Caco-2 (cell line): ENCODE measurements at regions of chr4 and their contacts with region 1.

Region 1: GRCh38 chr4:88514557-88515511 is 8.7 kb downstream of the PYURF start:
- DNase-seq: no peak
- H3K4me3 ChIP-seq: no peak overlapping the region
- H3K4me3 Mint-ChIP-seq: no peak overlapping the region
- H3K27ac Mint-ChIP-seq: no peak overlapping the region
- H3K4me1 ChIP-seq: no peaks in the 10 kb centered on the region
- H3K4me1 Mint-ChIP-seq: no peaks in the 10 kb centered on the region
- H3K27me3 ChIP-seq: no peaks in the 10 kb centered on the region
- H3K27me3 Mint-ChIP-seq: no peaks in the 10 kb centered on the region
- CTCF ChIP-seq: no peak

Region 2: DNA sequence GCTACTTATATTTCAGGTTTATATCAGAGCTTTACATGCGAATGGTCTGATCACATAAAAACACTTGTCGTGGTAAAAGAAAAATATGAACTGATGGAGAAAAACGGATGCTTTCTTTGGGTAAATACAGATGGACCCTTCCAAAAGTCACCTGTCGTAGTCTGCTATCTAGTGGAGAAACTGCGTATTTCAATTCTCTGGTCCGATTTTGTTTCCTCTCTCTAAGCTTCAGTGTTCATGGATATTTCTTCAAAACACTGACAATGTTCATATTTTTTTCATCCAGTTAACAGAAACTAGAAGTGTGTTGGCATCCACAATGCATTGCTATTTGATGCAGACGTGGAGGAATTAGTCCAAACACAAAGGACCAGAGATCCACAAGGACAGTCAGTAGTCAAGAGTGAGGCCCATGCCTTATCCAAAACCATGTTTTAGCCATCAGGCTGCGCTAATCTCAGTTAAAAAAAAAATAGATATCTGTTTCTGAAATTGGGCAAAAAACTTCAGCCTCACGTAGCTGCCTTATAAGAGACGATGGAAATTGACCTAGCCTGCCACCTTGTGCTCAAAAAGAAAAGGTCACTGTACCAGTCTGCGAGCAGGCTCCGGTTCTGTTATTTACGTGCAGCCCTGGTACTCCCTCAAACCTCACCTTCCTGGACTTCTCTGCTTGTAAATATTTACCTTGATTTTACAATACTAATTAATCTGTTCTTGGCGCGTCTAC is 666.0 kb before region 1 on chr4:
- CTCF ChIA-PET with region 1: interaction called, 5 read pairs
- POLR2A ChIA-PET with region 1: no interaction called
- intact Hi-C with region 1: loop called (anchors 5 kb)
- DNase-seq: peak in 1 of 2 experiments; percentile 50
- H3K4me3 ChIP-seq: no peak overlapping the region
- H3K4me3 Mint-ChIP-seq: no peak overlapping the region
- H3K27ac Mint-ChIP-seq: no peak overlapping the region
- H3K4me1 ChIP-seq: peaks cover 12% of the 10 kb centered on the region
- H3K4me1 Mint-ChIP-seq: peaks cover 23% of the 10 kb centered on the region
- H3K27me3 ChIP-seq: no peaks in the 10 kb centered on the region
- H3K27me3 Mint-ChIP-seq: peaks cover 10% of the 10 kb centered on the region
- CTCF ChIP-seq: peak; percentile 49 to 72

Region 3: GRCh38 chr4:88054901-88055300 is 459.9 kb before region 1 on chr4:
- CTCF ChIA-PET with region 1: interaction called, 5 read pairs
- POLR2A ChIA-PET with region 1: no interaction called
- intact Hi-C with region 1: loop called (anchors 2 kb)
- DNase-seq: peak; percentile 71
- H3K4me3 ChIP-seq: no peak overlapping the region
- H3K4me3 Mint-ChIP-seq: no peak overlapping the region
- H3K27ac Mint-ChIP-seq: no peak overlapping the region
- H3K4me1 ChIP-seq: no peaks in the 10 kb centered on the region
- H3K4me1 Mint-ChIP-seq: peaks cover 6% of the 10 kb centered on the region
- H3K27me3 ChIP-seq: no peaks in the 10 kb centered on the region
- H3K27me3 Mint-ChIP-seq: no peaks in the 10 kb centered on the region
- CTCF ChIP-seq: peak; percentile 63 to 80

Region 4: DNA sequence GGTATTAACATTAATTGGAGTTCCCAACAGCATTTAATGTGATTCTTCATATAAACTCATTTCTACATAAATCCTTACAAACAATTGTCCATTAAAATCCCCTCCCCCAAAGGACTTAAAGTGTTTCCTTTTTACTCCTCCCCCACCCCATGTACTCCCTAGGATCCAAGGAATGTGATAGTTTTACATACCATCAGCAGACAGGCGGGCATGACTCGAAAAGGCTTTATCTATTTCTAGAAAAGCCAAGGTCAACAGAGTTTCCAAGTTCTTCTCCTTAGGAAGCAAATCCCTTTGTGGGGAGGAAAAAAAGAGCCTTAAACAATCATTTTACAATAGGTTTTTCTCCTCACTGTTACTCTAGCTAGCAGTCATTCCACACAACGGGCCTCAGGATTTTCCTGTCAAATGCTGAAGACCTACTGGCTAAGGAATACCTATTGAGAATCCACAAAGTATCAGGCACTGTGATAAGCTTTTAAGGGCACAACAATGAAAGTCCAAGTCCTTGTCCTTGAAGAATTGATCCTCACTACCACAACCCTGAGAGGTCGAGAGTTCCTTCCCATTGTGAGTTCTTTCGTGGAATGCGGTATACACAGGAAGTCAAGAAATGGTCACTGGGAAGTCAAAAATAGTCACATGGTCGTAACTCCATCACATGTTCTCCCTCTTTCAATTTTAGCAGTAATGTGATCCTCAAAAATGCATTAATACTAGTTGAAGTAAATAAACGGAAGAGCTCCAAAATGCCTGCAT is 237.7 kb before region 1 on chr4:
- CTCF ChIA-PET with region 1: no interaction called
- POLR2A ChIA-PET with region 1: no interaction called
- intact Hi-C with region 1: loop called (anchors 2 kb)
- DNase-seq: peak in 1 of 2 experiments; percentile 21
- H3K4me3 ChIP-seq: no peak overlapping the region
- H3K4me3 Mint-ChIP-seq: peak overlapping the region; percentile 50
- H3K27ac Mint-ChIP-seq: no peak overlapping the region
- H3K4me1 ChIP-seq: peaks cover 66% of the 10 kb centered on the region
- H3K4me1 Mint-ChIP-seq: peaks cover 19% of the 10 kb centered on the region
- H3K27me3 ChIP-seq: no peaks in the 10 kb centered on the region
- H3K27me3 Mint-ChIP-seq: no peaks in the 10 kb centered on the region
- CTCF ChIP-seq: no peak

Region 5: GRCh38 chr4:88369936-88370335 is 144.9 kb before region 1 on chr4:
- CTCF ChIA-PET with region 1: interaction called, 12 read pairs
- POLR2A ChIA-PET with region 1: no interaction called
- intact Hi-C with region 1: loop called (anchors 1 kb)
- DNase-seq: no peak
- H3K4me3 ChIP-seq: no peak overlapping the region; the same call in 1 of the 2 replicates
- H3K4me3 Mint-ChIP-seq: peak overlapping the region; percentile 60
- H3K27ac Mint-ChIP-seq: no peak overlapping the region
- H3K4me1 ChIP-seq: no peaks in the 10 kb centered on the region
- H3K4me1 Mint-ChIP-seq: no peaks in the 10 kb centered on the region
- H3K27me3 ChIP-seq: no peaks in the 10 kb centered on the region
- H3K27me3 Mint-ChIP-seq: peaks cover 2% of the 10 kb centered on the region
- CTCF ChIP-seq: no peak

Region 6: DNA sequence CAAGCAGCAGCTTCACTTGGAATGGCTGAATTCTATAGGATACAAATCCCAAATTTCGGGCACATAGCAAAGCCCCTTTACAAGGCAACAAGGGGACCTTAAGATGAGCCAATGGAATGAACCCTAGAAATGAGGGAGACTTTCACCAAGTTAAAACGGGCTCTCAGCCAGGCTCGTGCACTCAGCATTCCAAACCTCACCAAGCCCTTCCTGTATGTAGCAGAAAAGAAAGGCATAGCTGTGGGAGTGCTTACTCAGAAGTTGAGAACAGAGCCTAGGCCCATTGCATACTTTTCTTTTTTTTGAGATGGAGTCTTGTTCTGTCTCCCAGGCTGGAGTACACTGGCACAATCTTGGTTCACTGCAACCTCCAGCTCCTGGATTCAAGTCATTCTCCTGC is 68.7 kb before region 1 on chr4:
- CTCF ChIA-PET with region 1: no interaction called
- POLR2A ChIA-PET with region 1: no interaction called
- intact Hi-C with region 1: loop called (anchors 1 kb)
- DNase-seq: no peak
- H3K4me3 ChIP-seq: no peak overlapping the region
- H3K4me3 Mint-ChIP-seq: no peak overlapping the region
- H3K27ac Mint-ChIP-seq: no peak overlapping the region
- H3K4me1 ChIP-seq: no peaks in the 10 kb centered on the region
- H3K4me1 Mint-ChIP-seq: no peaks in the 10 kb centered on the region
- H3K27me3 ChIP-seq: no peaks in the 10 kb centered on the region
- H3K27me3 Mint-ChIP-seq: no peaks in the 10 kb centered on the region
- CTCF ChIP-seq: no peak